Thyroid gland (tissue), 4 donors: ENCODE measurements at regions of chr5 and their contacts with region 1.

Region 1: DNA sequence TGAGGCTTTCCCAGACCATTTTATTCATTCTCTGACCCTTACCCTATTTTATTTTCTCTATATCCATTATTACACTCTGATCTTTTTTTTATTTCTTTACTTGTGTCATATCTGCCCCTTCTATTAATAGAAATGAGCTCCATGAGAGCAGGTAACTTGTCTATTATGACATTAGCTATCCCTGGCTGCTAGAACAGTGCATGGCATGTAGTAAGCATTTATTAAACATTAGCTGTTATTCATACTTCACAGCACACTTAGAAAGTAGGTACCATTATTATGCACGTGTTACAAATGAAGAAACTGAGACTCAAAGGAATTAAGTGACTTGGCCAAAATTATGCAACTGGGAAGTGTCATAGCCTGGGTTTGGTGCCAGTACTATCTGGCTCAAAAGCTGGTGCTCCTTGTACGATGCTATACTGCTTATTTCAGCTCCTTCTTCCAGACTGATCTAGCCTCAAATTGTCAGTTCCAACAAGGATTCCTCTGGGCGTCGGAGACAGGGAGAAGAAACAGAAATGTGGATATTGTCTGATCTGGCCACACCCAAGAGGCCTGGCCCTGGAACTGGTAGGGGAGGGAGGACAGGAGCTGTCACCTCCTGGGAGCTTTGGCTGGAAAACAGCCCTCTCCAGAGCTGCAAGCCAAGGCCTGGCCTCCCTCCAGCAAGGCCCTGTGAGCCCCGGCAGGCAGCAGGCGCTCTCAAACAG is 10.8 kb upstream of the NIPAL4 start:
- DNase-seq: peak; percentile 84 to 87
- H3K4me3 ChIP-seq: no peak overlapping the region
- H3K27ac ChIP-seq: peak overlapping the region in 1 of 3 donors; percentile 28
- H3K4me1 ChIP-seq: peaks cover 5 to 10% of the 10 kb centered on the region in 2 donors
- H3K27me3 ChIP-seq: no peaks in the 10 kb centered on the region
- CTCF ChIP-seq: no peak
- POLR2A ChIP-seq: no peak

Region 2: DNA sequence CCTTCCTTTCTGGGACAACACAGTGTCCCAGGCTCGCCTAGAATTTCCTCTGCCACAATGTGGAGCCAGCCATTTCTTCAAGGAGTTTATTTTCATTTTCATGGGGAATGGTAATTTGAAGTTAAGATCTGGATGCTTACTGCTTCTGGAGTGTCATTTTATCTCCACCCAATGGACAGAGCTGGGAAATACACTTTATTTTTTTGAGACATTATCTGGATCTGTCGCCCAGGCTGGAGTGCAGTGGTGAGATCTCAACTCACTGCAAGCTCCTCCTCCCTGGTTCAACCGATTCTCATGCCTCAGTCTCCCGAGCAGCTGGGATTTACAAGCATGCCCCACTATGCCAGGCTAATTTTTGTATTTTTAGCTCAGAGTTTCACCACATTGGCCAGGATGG is 269.4 kb after region 1 on chr5:
- intact Hi-C with region 1: loop called (anchors 10 kb)
- DNase-seq: peak; percentile 6 to 17
- H3K4me3 ChIP-seq: no peak overlapping the region
- H3K27ac ChIP-seq: no peak overlapping the region
- H3K4me1 ChIP-seq: peaks cover 2 to 4% of the 10 kb centered on the region in 2 donors
- H3K27me3 ChIP-seq: no peaks in the 10 kb centered on the region
- CTCF ChIP-seq: peak; percentile 13 to 70 (median 49)
- POLR2A ChIP-seq: no peak